PC-9 (cell line): ENCODE measurements at regions of chr11 and their contacts with region 1.

Region 1: DNA sequence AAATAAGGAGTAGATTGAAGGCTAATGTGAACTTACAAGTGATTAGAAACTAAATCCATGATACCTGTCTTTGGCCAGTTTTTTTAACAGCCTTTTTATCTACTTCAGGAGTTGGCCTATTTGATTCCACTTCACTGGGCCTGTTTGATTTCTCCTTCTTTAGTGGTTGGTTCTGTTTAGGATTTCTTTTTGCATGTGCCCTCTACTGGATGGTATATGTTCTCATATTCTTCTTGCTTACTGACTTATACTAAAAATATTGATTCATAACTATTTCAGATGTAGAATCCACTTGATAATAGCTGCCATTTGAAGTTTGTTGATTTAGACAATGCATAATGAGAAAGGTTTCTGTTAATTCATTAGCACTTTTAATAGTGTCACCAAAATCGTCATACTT is 53.9 kb downstream of the USP47 start:
- DNase-seq: no peak
- H3K4me3 ChIP-seq: no peak overlapping the region
- H3K27ac ChIP-seq: no peak overlapping the region
- H3K4me1 ChIP-seq: no peaks in the 10 kb centered on the region
- H3K27me3 ChIP-seq: no peaks in the 10 kb centered on the region
- CTCF ChIP-seq: peak; percentile 38; the same call in 1 of the 2 replicates

Region 2: GRCh38 chr11:11681536-11681935 is 214.1 kb before region 1 on chr11:
- CTCF ChIA-PET with region 1: no interaction called
- POLR2A ChIA-PET with region 1: no interaction called
- intact Hi-C with region 1: no loop called
- DNase-seq: no peak
- H3K4me3 ChIP-seq: no peak overlapping the region
- H3K27ac ChIP-seq: no peak overlapping the region
- H3K4me1 ChIP-seq: no peaks in the 10 kb centered on the region
- H3K27me3 ChIP-seq: peaks cover 31% of the 10 kb centered on the region
- CTCF ChIP-seq: no peak

Region 3: GRCh38 chr11:11884774-11885481 is 10.7 kb before region 1 on chr11:
- CTCF ChIA-PET with region 1: no interaction called
- POLR2A ChIA-PET with region 1: interaction called, 10 read pairs
- intact Hi-C with region 1: no loop called
- DNase-seq: no peak
- H3K4me3 ChIP-seq: no peak overlapping the region
- H3K27ac ChIP-seq: no peak overlapping the region
- H3K4me1 ChIP-seq: no peaks in the 10 kb centered on the region
- H3K27me3 ChIP-seq: no peaks in the 10 kb centered on the region
- CTCF ChIP-seq: no peak

Region 4: GRCh38 chr11:12149672-12150225 is 254.1 kb after region 1 on chr11:
- CTCF ChIA-PET with region 1: no interaction called
- POLR2A ChIA-PET with region 1: no interaction called
- intact Hi-C with region 1: no loop called
- DNase-seq: no peak
- H3K4me3 ChIP-seq: no peak overlapping the region
- H3K27ac ChIP-seq: no peak overlapping the region
- H3K4me1 ChIP-seq: no peaks in the 10 kb centered on the region
- H3K27me3 ChIP-seq: no peaks in the 10 kb centered on the region
- CTCF ChIP-seq: no peak